Caco-2 (cell line): ENCODE measurements at regions of chr9 and their contacts with region 1.

Region 1: DNA sequence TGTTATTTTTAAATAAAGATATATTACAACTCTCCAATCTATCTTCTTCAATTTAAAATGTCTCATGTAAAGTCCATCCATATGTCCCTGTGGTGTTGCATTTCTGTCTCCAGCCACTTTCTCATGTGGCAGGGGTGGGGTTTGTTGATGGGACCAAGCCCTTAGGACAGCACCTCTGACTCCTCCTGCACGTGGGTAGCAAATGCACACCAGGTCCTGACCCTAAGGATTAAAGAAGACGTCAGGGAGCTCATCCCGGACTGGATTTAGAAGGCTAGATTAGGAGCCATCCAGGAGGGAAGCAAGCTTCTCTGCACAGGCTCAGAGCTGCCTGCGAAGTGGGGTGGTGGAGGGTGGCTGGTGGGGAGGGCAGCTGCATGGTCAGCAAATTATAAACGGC is 38.9 kb upstream of the FAM120AOS start:
- DNase-seq: no peak
- H3K4me3 ChIP-seq: no peak overlapping the region
- H3K4me3 Mint-ChIP-seq: no peak overlapping the region
- H3K27ac Mint-ChIP-seq: no peak overlapping the region
- H3K4me1 ChIP-seq: no peaks in the 10 kb centered on the region
- H3K4me1 Mint-ChIP-seq: no peaks in the 10 kb centered on the region
- H3K27me3 ChIP-seq: no peaks in the 10 kb centered on the region
- H3K27me3 Mint-ChIP-seq: no peaks in the 10 kb centered on the region
- CTCF ChIP-seq: no peak

Region 2: DNA sequence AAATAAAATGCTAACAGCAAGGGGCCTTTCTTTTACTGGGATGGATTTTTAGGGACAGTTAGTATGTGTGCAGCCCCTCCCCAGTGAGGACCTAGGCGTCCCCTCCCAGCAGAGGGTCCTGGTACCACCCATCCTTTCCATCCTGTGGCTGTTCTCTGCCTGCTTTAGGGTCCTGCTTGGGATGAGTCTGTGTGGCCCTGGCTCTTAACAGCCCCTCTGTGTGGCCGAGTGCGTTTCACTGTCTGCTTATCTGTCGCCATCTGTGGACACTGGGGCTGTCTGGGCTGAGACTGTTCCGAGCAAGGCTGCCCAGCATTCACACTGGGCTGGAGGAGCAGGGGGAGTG is 291.4 kb before region 1 on chr9:
- CTCF ChIA-PET with region 1: interaction called, 12 read pairs
- POLR2A ChIA-PET with region 1: no interaction called
- intact Hi-C with region 1: no loop called
- DNase-seq: no peak
- H3K4me3 ChIP-seq: no peak overlapping the region
- H3K4me3 Mint-ChIP-seq: peak overlapping the region; percentile 29
- H3K27ac Mint-ChIP-seq: peak overlapping the region; percentile 55
- H3K4me1 ChIP-seq: peaks cover 27% of the 10 kb centered on the region
- H3K4me1 Mint-ChIP-seq: peaks cover 24% of the 10 kb centered on the region
- H3K27me3 ChIP-seq: no peaks in the 10 kb centered on the region
- H3K27me3 Mint-ChIP-seq: no peaks in the 10 kb centered on the region
- CTCF ChIP-seq: no peak